ENCODE measurements at regions of chr2 and their contacts with region 1.

Region 1: DNA sequence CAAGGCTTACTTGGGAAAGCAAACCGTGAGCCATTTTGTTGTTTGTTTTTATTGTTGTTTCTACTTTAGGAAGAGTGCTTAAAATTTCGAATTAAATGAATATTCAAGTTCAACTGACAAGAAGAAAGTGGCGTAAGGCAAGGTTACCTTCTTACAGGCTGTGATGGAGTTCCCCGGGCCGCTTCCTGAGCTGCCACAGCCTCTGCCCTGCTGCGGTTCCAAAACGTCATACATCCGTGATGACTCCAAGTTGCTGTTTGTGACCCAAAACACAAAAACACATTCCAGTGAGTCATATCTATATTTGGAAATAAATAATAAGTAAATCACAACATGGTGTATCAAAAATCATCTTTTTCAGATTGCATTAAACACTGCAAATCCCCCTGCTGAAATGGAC is 49.7 kb downstream of the SPHKAP start:
- DNase-seq: no peak
- H3K4me3 ChIP-seq: no peak overlapping the region
- H3K27ac ChIP-seq: no peak overlapping the region
- H3K4me1 ChIP-seq: no peaks in the 10 kb centered on the region
- H3K27me3 ChIP-seq: no peaks in the 10 kb centered on the region
- CTCF ChIP-seq: no peak

Region 2: GRCh38 chr2:228094377-228094921 is 37.4 kb before region 1 on chr2:
- intact Hi-C with region 1: loop called (anchors 1 kb)
- DNase-seq: no peak
- H3K4me3 ChIP-seq: no peak overlapping the region
- H3K27ac ChIP-seq: no peak overlapping the region
- H3K4me1 ChIP-seq: no peaks in the 10 kb centered on the region
- H3K27me3 ChIP-seq: no peaks in the 10 kb centered on the region
- CTCF ChIP-seq: no peak

Region 3: DNA sequence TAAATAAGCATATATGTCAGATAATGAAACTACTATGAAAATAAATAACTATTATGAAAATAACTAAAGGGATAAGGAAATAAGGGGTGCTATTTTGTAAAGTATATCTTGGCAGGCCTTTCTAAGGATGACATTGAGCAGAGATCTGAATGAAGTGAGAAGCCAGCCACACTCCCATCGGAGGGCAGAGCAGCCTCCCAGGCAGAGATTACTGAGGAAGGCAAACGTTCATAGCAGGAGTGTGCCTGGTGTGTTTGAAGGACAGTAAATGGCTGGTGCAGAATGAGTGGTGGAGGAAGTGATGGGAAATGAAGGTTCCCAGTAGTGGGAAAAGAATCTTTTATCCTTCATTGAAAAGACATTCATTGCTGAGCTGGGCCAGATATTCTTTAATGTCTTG is 12.9 kb before region 1 on chr2:
- intact Hi-C with region 1: no loop called
- DNase-seq: no peak
- H3K4me3 ChIP-seq: no peak overlapping the region
- H3K27ac ChIP-seq: no peak overlapping the region
- H3K4me1 ChIP-seq: no peaks in the 10 kb centered on the region
- H3K27me3 ChIP-seq: no peaks in the 10 kb centered on the region
- CTCF ChIP-seq: no peak

Region 4: GRCh38 chr2:228164718-228165117 is 32.9 kb after region 1 on chr2:
- intact Hi-C with region 1: no loop called
- DNase-seq: no peak
- H3K4me3 ChIP-seq: no peak overlapping the region
- H3K27ac ChIP-seq: no peak overlapping the region
- H3K4me1 ChIP-seq: no peaks in the 10 kb centered on the region
- H3K27me3 ChIP-seq: no peaks in the 10 kb centered on the region
- CTCF ChIP-seq: no peak

Region 5: GRCh38 chr2:228590681-228591080 is 458.8 kb after region 1 on chr2:
- intact Hi-C with region 1: no loop called
- DNase-seq: no peak
- H3K4me3 ChIP-seq: no peak overlapping the region
- H3K27ac ChIP-seq: no peak overlapping the region
- H3K4me1 ChIP-seq: no peaks in the 10 kb centered on the region
- H3K27me3 ChIP-seq: no peaks in the 10 kb centered on the region
- CTCF ChIP-seq: no peak

Measured in tibial artery (tissue), 4 donors.